ENCODE measurements at regions of chr11 and their contacts with region 1.

Region 1: GRCh38 chr11:128323381-128323780 is 264.0 kb downstream of the ETS1 start:
- DNase-seq: peak in 6 of 14 experiments; percentile 37 to 83 (median 66)
- ATAC-seq: peak; percentile 10
- H3K4me3 ChIP-seq: no peak overlapping the region
- H3K4me3 Mint-ChIP-seq: peak overlapping the region; percentile 47
- H3K27ac ChIP-seq: peak overlapping the region; percentile 89 to 91
- H3K27ac Mint-ChIP-seq: peak overlapping the region; percentile 93
- H3K4me1 ChIP-seq: peaks cover 85% of the 10 kb centered on the region
- H3K4me1 Mint-ChIP-seq: peaks cover 84% of the 10 kb centered on the region
- H3K27me3 ChIP-seq: no peaks in the 10 kb centered on the region
- H3K27me3 Mint-ChIP-seq: no peaks in the 10 kb centered on the region
- CTCF ChIP-seq: peak; percentile 52

Region 2: GRCh38 chr11:128105950-128106349 is 217.4 kb before region 1 on chr11:
- CTCF ChIA-PET with region 1: no interaction called
- POLR2A ChIA-PET with region 1: no interaction called
- intact Hi-C with region 1: no loop called
- DNase-seq: no peak
- ATAC-seq: no peak
- H3K4me3 ChIP-seq: no peak overlapping the region
- H3K4me3 Mint-ChIP-seq: no peak overlapping the region
- H3K27ac ChIP-seq: no peak overlapping the region
- H3K27ac Mint-ChIP-seq: no peak overlapping the region
- H3K4me1 ChIP-seq: no peaks in the 10 kb centered on the region
- H3K4me1 Mint-ChIP-seq: peaks cover 11% of the 10 kb centered on the region
- H3K27me3 ChIP-seq: no peaks in the 10 kb centered on the region
- H3K27me3 Mint-ChIP-seq: no peaks in the 10 kb centered on the region
- CTCF ChIP-seq: no peak

Region 3: DNA sequence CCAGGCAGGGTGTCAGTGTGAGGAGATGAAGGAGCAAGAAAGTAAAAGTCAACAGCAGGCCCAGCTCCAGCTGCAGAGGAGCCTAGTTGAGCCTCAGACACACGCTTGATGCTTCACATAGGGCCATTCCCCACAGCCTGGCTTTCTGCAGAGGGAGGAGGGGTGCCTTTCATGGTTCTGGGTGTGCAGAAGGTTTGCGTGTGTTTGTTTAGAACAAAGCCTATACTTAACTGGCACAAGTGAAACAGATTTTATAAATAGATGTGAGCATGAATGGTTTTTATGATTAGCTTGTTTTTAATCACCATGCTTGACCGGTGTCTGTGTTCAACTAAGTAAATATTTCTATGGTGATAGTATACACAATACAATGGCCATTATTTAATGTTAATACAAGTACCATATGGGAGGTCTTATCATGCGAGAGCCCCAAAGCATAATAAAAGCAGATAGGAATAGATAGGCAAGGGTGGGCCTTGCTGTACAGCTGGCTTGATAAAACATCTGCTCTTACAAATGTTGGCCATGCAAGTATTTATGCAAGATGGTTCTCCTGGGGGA is 26.2 kb before region 1 on chr11:
- CTCF ChIA-PET with region 1: interaction called, 37 read pairs
- POLR2A ChIA-PET with region 1: interaction called, 49 read pairs
- intact Hi-C with region 1: loop called (anchors 1 to 5 kb)
- DNase-seq: peak in 8 of 14 experiments; percentile 28 to 86 (median 42)
- ATAC-seq: peak; percentile 47
- H3K4me3 ChIP-seq: no peak overlapping the region
- H3K4me3 Mint-ChIP-seq: peak overlapping the region; percentile 73
- H3K27ac ChIP-seq: peak overlapping the region; percentile 90 to 94
- H3K27ac Mint-ChIP-seq: peak overlapping the region; percentile 100
- H3K4me1 ChIP-seq: peaks cover 86% of the 10 kb centered on the region
- H3K4me1 Mint-ChIP-seq: peaks cover 98% of the 10 kb centered on the region
- H3K27me3 ChIP-seq: no peaks in the 10 kb centered on the region
- H3K27me3 Mint-ChIP-seq: no peaks in the 10 kb centered on the region
- CTCF ChIP-seq: no peak

Region 4: DNA sequence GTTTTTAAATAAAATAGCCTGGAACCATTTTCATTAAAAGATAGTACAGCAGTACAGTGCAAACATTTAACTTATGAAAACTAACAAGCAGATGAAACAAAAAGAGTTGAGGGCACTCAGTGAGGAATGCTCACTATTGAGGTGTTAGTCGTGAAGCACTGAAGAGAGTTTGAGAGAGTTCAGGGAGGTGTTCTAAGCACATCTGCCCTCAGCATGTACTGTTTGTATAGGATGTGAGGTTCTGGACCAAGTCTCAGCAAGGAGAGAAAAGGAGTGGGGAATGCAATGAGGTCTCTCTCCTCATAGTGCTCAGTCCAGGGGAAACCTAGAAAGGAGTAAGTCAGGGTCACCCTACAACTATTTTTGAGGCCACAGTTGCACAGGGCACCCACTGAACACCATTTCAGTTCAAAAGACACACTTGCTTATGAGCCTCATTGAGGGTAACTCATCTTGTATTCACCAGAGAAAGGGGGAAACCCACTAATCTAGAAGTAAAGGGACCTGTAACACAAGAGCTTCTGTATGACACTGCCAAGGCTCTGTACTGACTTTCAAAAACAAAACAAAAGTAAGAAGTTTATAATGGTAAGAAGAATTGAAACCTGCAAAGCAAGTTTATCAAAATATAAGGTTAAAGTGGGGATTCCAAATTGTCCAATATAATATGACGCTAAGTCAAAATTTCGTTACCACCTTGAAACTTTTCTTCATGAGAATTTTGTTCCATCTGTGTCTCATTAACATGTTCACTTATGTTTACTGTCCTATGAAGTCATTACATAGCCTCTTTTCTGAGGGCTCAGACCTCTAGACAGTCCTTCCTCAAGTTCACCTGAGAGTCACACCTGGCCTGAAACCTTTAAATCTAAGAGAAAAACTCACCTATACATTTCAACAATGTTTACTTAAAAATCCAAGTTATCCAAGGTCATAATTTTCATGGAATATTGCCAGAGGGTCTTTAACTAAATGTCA is 11.3 kb before region 1 on chr11:
- CTCF ChIA-PET with region 1: interaction called, 13 read pairs
- POLR2A ChIA-PET with region 1: interaction called, 4 read pairs
- intact Hi-C with region 1: no loop called
- DNase-seq: peak in 2 of 14 experiments; percentile 64 to 65
- ATAC-seq: peak; percentile 79
- H3K4me3 ChIP-seq: no peak overlapping the region
- H3K4me3 Mint-ChIP-seq: peak overlapping the region; percentile 18
- H3K27ac ChIP-seq: peak overlapping the region; percentile 2 to 38
- H3K27ac Mint-ChIP-seq: peak overlapping the region; percentile 100
- H3K4me1 ChIP-seq: peaks cover 39% of the 10 kb centered on the region
- H3K4me1 Mint-ChIP-seq: peaks cover 91% of the 10 kb centered on the region
- H3K27me3 ChIP-seq: no peaks in the 10 kb centered on the region
- H3K27me3 Mint-ChIP-seq: no peaks in the 10 kb centered on the region
- CTCF ChIP-seq: no peak

Region 5: DNA sequence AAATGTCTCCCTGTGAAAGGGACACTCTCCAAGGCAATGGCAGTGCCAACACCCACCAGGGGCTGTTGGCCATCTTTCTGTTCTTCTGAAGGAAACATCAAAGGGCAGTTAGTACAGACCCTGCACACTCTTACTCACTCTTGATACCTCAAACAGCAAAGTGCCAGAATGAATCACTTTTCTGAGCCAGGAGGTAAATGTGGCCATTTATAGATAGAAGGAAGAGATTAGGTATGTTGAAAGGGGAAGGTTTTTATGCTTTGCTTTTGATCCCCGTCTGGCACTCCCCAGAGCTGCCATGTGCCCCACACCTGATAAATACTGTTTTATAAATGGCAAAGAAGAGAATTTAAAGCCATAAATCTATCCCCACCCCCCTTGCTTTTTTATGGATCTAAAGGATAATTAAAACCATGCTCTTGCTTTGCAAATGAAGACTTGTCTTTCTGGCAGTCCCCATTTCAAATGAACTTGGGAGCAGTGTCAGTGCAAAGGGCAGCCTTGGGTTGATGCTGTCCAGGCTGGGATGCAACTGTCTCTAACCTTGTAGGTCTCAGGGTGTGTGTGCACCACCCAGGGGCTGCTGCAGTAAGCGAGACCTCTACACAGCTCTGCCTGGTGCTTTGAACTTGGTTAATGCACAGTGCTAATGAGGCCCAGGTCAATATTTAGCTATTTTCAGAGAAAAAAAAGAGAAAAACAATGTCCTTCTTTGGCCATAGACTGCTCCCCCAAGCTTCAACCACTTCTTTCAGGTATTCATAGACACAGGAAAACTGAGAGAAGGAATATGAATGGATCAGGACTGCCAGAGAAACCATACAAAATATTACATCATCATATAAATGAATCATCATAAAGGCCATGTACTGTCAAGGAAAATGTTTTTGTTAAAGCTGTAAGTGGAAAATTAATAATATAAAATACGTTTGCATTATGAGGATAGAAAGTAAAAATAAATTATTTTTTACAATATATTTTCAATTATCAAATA is 56.5 kb after region 1 on chr11:
- CTCF ChIA-PET with region 1: interaction called, 4 read pairs
- POLR2A ChIA-PET with region 1: interaction called, 4 read pairs
- intact Hi-C with region 1: loop called in 1 of 2 experiments (anchors 2 kb)
- DNase-seq: peak in 8 of 14 experiments; percentile 5 to 68 (median 26)
- ATAC-seq: peak; percentile 86
- H3K4me3 ChIP-seq: no peak overlapping the region
- H3K4me3 Mint-ChIP-seq: no peak overlapping the region
- H3K27ac ChIP-seq: no peak overlapping the region
- H3K27ac Mint-ChIP-seq: peak overlapping the region; percentile 47
- H3K4me1 ChIP-seq: peaks cover 13% of the 10 kb centered on the region
- H3K4me1 Mint-ChIP-seq: peaks cover 58% of the 10 kb centered on the region
- H3K27me3 ChIP-seq: no peaks in the 10 kb centered on the region
- H3K27me3 Mint-ChIP-seq: no peaks in the 10 kb centered on the region
- CTCF ChIP-seq: no peak

Region 6: GRCh38 chr11:128463371-128463829 is 140.0 kb after region 1 on chr11:
- CTCF ChIA-PET with region 1: interaction called, 6 read pairs
- POLR2A ChIA-PET with region 1: interaction called, 98 read pairs
- intact Hi-C with region 1: no loop called
- DNase-seq: peak in 2 of 14 experiments; percentile 3 to 17
- ATAC-seq: no peak
- H3K4me3 ChIP-seq: no peak overlapping the region
- H3K4me3 Mint-ChIP-seq: peak overlapping the region; percentile 82
- H3K27ac ChIP-seq: peak overlapping the region; percentile 92 to 94
- H3K27ac Mint-ChIP-seq: peak overlapping the region; percentile 99
- H3K4me1 ChIP-seq: peaks cover 73% of the 10 kb centered on the region
- H3K4me1 Mint-ChIP-seq: peaks cover 96% of the 10 kb centered on the region
- H3K27me3 ChIP-seq: no peaks in the 10 kb centered on the region
- H3K27me3 Mint-ChIP-seq: no peaks in the 10 kb centered on the region
- CTCF ChIP-seq: no peak

Measured in CD4-positive, alpha-beta T cell (primary cell).